ENCODE measurements at regions of chr3 and their contacts with region 1.

Region 1: GRCh38 chr3:156040041-156040440 is 80.3 kb upstream of the KCNAB1 start:
- DNase-seq: no peak
- ATAC-seq: no peak
- H3K4me3 ChIP-seq: no peak overlapping the region
- H3K4me3 Mint-ChIP-seq: no peak overlapping the region
- H3K27ac ChIP-seq: no peak overlapping the region
- H3K27ac Mint-ChIP-seq: no peak overlapping the region
- H3K4me1 ChIP-seq: no peaks in the 10 kb centered on the region
- H3K4me1 Mint-ChIP-seq: no peaks in the 10 kb centered on the region
- H3K27me3 ChIP-seq: no peaks in the 10 kb centered on the region
- H3K27me3 Mint-ChIP-seq: peaks cover 15% of the 10 kb centered on the region
- CTCF ChIP-seq: no peak

Region 2: GRCh38 chr3:157130467-157131251 is 1090.6 kb after region 1 on chr3:
- CTCF ChIA-PET with region 1: no interaction called
- POLR2A ChIA-PET with region 1: no interaction called
- intact Hi-C with region 1: loop called (anchors 10 kb)
- DNase-seq: peak; percentile 42
- ATAC-seq: no peak
- H3K4me3 ChIP-seq: no peak overlapping the region
- H3K4me3 Mint-ChIP-seq: peak overlapping the region; percentile 10
- H3K27ac ChIP-seq: no peak overlapping the region
- H3K27ac Mint-ChIP-seq: no peak overlapping the region
- H3K4me1 ChIP-seq: peaks cover 3 to 29% of the 10 kb centered on the region in 2 donors
- H3K4me1 Mint-ChIP-seq: peaks cover 25% of the 10 kb centered on the region
- H3K27me3 ChIP-seq: no peaks in the 10 kb centered on the region
- H3K27me3 Mint-ChIP-seq: no peaks in the 10 kb centered on the region
- CTCF ChIP-seq: peak; percentile 63